Cardiac septum (tissue), 1 donor: ENCODE measurements at regions of chr3 and their contacts with region 1.

Region 1: DNA sequence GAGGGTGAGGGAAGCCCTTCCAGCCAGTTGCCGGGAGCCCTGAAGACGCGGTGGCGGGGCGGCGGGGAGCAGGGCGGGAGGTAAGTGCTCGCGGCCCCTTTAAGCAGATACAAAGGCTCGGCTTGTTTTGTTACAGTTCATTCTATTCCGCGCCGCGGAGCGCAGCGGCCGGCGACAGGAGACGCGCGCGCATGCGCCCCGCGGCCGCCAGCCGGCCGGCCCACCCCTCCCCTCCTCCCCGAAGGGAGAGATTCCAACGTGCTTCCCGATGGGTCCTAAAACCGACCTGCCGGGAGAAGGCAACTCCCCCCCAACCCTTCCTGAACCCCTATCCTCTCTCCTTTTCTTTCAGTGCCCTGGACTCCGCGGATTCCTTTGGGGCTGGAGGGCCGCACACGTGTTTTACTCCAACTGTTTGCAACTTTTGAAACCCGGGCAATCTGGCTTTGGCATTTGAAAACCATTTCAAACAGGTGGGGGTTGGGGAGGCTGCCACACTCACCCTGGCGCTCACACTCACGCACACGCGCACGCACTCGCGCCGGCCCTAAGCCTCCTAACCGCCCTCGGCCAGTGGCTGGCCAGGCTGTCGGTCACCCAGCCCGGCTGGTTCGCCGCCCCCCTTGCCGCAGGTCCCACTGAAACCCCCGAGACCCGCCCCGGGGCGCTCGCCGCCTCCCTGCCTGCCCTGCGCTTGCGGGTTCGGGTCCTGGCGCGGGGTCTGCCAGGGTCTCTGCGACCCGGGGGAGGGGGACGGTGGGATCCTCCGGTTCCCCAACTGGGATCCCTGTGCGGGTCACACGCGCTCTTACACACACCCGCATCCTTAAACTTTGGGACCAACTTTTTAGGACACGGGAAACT is at the start of gene MAGI1:
- DNase-seq: peak; percentile 92
- total RNA-seq, gene MAGI1: 69.4 TPM

Region 2: GRCh38 chr3:65107174-65107573 is 931.8 kb before region 1 on chr3:
- intact Hi-C with region 1: no loop called
- DNase-seq: no peak

Region 3: DNA sequence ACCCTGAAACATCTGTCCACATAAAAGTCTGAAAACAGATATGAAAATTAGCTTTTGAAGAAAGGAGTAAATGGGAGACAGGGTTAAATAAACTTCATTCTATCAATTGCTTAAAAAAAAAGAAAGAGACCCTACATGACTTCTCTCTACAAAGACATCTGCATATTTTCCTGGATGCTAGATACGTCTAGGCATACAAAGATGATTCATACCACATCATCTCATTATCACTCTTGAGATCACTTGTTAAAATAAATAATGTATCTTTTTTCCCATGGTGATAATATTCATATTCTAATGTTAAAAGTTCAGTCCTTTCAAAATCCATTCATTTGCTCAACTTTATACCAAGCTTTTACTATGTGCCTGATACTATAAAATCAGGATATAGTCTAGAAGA is 296.0 kb before region 1 on chr3:
- intact Hi-C with region 1: no loop called
- DNase-seq: no peak

Region 4: DNA sequence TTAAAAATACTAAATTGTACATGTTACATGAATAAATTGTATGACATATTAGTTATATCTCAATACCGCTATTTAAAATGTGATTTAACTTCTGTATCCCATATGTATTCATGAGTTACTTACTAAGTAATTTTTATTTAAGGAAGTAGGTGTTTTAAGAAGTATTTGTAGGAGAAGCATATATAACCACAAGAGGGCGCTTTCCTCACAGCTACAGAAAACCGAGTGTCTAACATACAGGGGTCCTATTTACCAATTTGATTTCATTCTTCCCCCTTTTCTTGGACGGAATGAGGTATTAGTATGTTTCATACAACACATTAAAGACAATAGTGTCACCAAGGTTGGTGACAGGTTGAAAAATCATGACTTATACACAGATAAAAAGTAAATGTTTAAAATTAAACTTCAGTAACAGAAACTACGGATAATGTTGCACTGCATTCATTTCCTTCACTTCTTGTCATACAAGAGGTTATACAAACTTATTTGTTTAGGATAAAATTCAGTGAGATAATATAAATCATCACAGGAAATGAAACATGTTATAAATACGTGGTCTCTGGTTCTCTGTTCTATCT is 253.8 kb before region 1 on chr3:
- intact Hi-C with region 1: loop called (anchors 2 kb)
- DNase-seq: no peak

Region 5: DNA sequence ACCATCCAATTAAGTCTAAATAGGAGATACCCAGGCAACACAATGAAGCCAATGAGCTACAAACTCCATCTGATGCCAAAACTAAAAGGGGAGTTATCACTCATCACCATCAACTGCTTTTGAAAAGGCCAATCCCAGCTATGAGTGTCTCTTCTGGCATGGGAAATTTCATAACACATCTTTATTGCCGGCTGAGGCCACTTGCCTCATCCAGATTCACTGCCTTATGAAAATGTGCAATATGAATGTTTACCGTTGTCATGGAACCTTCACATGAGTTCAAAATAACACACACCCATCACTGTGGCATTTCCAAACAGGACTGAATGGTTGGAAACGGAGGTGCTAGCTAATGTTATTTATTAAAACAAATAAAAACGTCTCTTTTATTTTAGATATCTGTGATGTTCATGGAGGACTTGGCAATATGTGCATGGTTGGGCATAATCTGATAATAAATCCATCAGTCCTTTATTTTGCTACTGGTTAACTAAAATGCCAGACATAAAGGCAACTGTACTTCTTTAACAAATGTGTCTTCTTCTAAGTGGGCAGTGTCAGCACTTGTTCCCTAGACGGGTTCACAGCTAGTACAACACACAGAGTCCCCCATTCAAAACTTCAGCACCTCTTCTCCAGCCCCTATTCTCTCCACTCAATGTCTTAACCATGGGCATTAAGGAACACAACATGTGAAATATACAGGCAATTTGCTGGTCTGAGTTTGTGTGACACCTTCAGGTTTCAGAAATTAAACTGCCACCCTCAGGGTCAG is 144.1 kb before region 1 on chr3:
- intact Hi-C with region 1: loop called (anchors 5 kb)
- DNase-seq: no peak

Region 6: GRCh38 chr3:65953301-65953812 is 85.6 kb before region 1 on chr3:
- intact Hi-C with region 1: loop called (anchors 5 kb)
- DNase-seq: no peak

Region 7: GRCh38 chr3:66115858-66116654 is 77.1 kb after region 1 on chr3:
- intact Hi-C with region 1: loop called (anchors 5 kb)
- DNase-seq: peak; percentile 81

Region 8: DNA sequence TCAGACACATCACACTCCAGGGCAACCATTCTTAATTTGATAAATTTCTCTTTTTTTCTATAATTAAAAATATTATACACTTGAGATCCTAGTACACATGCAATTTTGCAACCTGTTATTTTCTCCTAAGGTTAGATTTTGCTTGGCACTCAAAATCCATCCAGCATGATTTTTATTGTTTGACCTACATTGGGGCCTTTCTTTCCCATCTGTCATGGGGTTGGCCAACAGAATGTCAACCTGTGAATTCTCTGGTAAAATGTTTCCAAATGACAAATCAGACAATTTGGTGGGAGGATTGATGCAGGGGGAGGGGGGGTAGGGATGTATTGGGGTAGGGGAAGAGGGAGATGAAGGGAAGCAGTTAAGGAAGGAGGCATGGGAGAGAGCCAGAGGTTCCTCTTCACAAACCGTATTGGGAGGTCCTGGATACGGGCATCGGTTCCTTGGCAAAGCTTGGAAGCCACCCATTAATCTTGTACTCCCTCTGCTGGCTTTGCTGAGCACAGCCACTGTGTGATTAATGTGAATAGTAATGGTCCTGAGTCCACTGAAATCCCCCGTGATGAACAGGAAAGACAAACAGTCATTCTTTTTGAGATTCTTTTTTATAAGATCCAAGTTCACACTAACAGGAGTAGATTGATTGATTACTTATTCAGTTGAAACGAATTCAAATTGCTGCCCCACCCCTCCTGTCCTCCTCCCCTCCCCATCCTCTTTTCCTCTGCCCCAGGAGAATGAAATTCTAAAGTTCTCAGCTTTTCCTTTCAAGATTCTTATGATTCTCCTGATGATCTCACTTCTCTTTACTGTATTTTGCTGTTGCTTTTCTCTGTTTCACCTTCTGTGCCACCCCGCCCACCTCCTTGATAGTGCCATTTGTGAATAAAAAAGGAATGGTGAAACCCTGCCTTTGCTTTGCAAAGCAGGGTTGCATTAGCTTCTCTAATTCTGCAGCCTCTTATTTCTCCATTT is 99.7 kb after region 1 on chr3:
- intact Hi-C with region 1: loop called (anchors 2 kb)
- DNase-seq: no peak

Region 9: GRCh38 chr3:66179793-66180192 is 140.8 kb after region 1 on chr3:
- intact Hi-C with region 1: loop called (anchors 5 kb)
- DNase-seq: no peak

Region 10: DNA sequence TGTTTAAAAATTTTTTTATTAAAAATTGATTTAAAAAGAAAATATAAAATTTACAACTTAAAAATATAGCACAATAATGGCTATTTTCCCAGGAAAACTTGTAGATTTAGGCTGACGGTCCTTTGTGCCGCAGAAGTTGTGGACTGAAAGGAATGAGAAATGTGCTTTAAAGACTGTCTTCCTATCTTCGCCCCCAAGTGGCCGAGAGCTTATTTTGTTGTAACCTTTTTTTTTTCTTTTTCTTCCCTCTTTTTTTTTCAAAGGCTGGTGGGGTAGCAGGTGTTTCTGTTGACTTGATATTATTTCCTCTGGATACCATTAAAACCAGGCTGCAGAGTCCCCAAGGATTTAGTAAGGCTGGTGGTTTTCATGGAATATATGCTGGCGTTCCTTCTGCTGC is 197.3 kb after region 1 on chr3:
- intact Hi-C with region 1: no loop called
- DNase-seq: no peak